ENCODE measurements at regions of chr2 and their contacts with region 1.

Region 1: GRCh38 chr2:112244854-112245253 is 10.0 kb downstream of the ZC3H8 start:
- DNase-seq: no peak
- H3K4me3 ChIP-seq: no peak overlapping the region
- H3K27me3 ChIP-seq: no peaks in the 10 kb centered on the region
- CTCF ChIP-seq: no peak

Region 2: GRCh38 chr2:112046231-112046630 is 198.6 kb before region 1 on chr2:
- CTCF ChIA-PET with region 1: no interaction called
- POLR2A ChIA-PET with region 1: no interaction called
- DNase-seq: no peak
- H3K4me3 ChIP-seq: no peak overlapping the region
- H3K27me3 ChIP-seq: peaks cover 3% of the 10 kb centered on the region; the same call in 1 of the 2 replicates
- CTCF ChIP-seq: no peak

Region 3: DNA sequence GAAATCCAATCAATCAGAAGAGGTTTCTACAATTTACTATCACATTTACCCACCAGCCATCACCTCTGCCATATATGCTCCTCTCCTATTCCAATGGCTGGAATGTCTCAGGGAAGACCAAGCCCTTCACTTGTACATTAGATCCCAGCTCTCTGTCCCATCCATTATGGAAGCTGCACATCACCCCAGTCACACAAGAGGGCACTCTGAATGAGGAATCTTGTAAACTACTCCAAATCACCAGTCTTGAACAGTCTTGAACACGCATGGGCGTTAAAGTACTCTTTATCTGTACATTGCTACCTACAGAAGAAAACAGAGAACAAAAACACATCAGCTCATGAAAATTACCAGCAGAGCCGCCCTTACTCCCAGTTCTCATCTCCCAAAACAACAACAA is 28.7 kb before region 1 on chr2:
- CTCF ChIA-PET with region 1: no interaction called
- POLR2A ChIA-PET with region 1: no interaction called
- DNase-seq: no peak
- H3K4me3 ChIP-seq: no peak overlapping the region
- H3K27me3 ChIP-seq: no peaks in the 10 kb centered on the region
- CTCF ChIP-seq: no peak

Region 4: GRCh38 chr2:112229348-112229747 is 15.5 kb before region 1 on chr2:
- CTCF ChIA-PET with region 1: no interaction called
- POLR2A ChIA-PET with region 1: no interaction called
- DNase-seq: no peak
- H3K4me3 ChIP-seq: no peak overlapping the region
- H3K27me3 ChIP-seq: no peaks in the 10 kb centered on the region
- CTCF ChIP-seq: no peak

Region 5: DNA sequence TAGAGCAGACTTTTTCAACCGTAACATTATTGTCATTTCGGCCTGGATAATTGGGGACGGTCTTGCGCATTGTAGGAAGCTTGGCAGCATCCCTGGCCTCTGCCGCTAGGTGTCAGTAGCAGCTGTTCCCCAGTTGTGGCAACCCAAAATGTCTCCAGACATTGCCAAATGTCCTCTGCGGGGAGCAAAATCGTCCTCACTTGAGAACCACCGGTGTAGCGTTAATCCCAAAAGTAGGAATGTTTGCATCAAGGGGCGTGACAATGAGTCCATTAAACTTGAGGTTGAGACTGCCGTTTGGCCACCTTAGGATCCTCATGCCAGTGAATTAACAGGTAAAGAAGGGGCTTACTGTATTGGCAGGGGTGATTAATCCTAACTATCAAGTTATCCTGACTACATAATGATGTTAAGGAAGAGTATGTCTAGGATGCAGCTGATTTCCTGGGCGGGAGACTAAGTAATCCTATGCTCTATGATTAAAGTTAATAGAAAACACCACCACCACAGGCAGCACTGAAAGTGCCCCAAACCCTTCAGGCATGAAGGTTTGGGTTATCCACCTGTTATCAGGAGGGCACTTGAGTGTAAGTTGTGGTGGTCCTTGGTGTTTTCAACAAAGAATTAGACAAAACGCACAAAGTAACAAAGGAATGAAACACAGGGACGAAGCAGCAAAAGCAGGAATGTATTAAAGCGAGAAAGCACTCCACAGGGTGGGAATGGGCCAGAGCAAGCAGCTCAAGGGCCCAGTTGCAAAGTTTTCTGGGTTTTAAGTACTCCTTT is 14.8 kb after region 1 on chr2:
- CTCF ChIA-PET with region 1: interaction called, 13 read pairs
- POLR2A ChIA-PET with region 1: no interaction called
- DNase-seq: peak; percentile 9
- H3K4me3 ChIP-seq: no peak overlapping the region
- H3K27me3 ChIP-seq: no peaks in the 10 kb centered on the region
- CTCF ChIP-seq: peak; percentile 98

Measured in BJ (cell line).